ENCODE measurements at regions of chr4 and their contacts with region 1.

Region 1: GRCh38 chr4:24419181-24420034 is 164.9 kb downstream of the DHX15 start:
- DNase-seq: peak; percentile 73
- CTCF ChIP-seq: peak; percentile 99

Region 2: GRCh38 chr4:22897520-22898108 is 1521.8 kb before region 1 on chr4:
- CTCF ChIA-PET with region 1: interaction called, 48 read pairs
- POLR2A ChIA-PET with region 1: no interaction called
- DNase-seq: peak; percentile 46
- CTCF ChIP-seq: peak; percentile 69

Region 3: GRCh38 chr4:24433515-24434214 is 14.3 kb after region 1 on chr4:
- CTCF ChIA-PET with region 1: interaction called, 11 read pairs
- POLR2A ChIA-PET with region 1: no interaction called
- DNase-seq: no peak
- CTCF ChIP-seq: no peak

Region 4: GRCh38 chr4:24578364-24578763 is 159.0 kb after region 1 on chr4:
- CTCF ChIA-PET with region 1: no interaction called
- POLR2A ChIA-PET with region 1: no interaction called
- DNase-seq: no peak
- CTCF ChIP-seq: no peak

Measured in GM10248 (cell line).